Right ventricle myocardium inferior (tissue), 1 donor: ENCODE measurements at regions of chr19 and their contacts with region 1.

Region 1: DNA sequence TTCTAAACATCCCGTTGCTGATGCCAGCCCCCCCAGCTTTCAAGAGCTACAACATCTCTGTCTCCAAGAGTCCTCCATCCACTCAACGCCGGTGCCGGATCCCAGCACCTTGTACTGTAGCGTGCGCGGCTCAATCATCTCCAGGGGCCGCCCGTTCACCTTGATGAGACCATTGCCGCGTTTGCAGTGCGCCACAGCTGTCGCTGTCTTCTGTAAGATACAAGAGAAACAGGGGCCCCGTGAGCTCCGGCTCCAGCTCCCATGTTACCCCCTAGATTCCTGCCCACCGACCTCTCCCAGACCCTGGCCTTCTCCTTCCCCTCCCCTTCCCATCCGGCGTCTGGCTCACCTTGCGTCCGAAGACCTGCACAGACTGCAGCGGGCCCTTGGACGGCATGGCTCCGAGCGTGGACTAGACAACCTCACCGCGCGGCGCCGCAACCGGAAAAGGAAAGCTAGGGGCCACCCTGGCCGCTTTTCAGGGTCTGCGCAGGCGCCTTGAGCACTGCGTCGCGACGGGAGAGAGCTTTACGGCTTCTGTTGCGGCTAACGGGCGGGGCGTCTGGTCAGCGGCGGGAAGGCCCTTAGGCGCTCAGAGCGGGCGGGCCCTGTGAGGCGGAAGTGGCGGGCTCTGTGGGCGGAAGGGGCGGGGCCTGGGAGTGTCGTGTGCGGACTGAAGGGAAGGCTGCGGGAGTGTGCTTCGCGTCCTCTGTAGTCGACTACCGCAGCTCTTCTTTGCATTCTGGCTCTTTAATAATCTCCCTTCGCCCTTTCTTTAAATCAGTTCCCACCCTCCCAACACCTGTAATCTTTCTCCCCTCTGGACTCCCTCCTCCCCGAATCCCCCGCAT is at the start of gene RPS16:
- DNase-seq: peak; percentile 99
- ATAC-seq: peak; percentile 99
- total RNA-seq, gene RPS16: 1,258 TPM

Region 2: GRCh38 chr19:39390755-39391592 is 44.8 kb before region 1 on chr19 and contains the starts of genes MED29 and PAF1:
- intact Hi-C with region 1: loop called (anchors 5 kb)
- DNase-seq: peak; percentile 97
- ATAC-seq: peak; percentile 97
- total RNA-seq, gene MED29: 21.8 TPM
- total RNA-seq, gene PAF1: 34.5 TPM

Region 3: DNA sequence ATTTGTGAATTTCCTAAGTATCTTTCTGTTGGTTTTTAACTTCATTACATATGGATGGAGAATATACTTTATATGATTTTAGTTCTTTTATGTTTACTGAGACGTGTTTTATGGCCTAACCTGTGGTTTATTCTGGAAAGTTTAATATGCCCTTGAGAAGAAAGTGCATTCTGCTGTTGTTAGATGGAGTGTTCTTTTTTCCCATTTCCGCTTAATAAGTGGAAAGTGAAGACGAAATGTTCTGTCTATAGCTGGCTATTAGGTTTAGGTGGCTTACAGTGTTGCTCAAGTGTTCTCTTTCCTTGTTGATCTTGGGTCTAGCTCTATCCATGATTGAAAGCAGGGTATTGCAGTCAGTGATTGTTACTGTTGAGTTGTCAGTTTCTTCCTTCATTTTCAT is 27.7 kb after region 1 on chr19:
- intact Hi-C with region 1: no loop called
- DNase-seq: no peak
- ATAC-seq: no peak

Region 4: DNA sequence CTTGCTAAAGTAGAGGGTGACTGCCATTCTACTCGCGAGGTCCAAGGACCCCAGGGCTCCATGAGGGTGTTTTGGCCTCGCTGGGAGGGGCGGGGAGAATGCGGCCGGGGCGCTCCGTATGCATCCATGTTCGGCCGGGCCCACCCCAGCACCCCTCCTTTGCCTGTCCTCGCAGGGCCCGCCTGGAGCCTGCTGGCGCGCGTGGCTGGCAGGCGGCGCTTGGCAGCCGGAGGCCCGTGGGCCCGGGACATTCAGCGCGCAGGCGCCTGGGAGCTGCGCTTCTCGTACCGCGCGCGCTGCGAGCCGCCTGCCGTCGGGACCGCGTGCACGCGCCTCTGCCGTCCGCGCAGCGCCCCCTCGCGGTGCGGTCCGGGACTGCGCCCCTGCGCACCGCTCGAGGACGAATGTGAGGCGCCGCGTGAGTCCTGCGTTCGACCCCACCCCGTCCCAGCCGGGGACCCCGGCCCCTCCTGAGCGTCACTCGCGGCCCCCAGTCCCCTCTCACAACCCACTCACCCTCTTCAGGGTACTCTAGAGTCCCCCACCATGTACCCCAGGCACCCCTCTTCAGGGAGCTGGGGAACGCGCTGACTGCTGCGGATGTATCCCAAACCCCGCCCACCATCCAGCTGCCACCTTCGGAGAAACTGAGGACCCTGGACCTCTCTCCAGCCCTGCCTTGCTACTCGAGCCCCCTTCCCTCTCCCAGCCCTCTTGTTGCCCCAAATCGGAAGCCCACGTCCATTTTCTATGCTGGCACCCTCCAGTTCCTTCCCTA is 67.1 kb after region 1 on chr19:
- intact Hi-C with region 1: no loop called
- DNase-seq: peak; percentile 77
- ATAC-seq: peak; percentile 56